ENCODE measurements at regions of chr22 and their contacts with region 1.

Region 1: DNA sequence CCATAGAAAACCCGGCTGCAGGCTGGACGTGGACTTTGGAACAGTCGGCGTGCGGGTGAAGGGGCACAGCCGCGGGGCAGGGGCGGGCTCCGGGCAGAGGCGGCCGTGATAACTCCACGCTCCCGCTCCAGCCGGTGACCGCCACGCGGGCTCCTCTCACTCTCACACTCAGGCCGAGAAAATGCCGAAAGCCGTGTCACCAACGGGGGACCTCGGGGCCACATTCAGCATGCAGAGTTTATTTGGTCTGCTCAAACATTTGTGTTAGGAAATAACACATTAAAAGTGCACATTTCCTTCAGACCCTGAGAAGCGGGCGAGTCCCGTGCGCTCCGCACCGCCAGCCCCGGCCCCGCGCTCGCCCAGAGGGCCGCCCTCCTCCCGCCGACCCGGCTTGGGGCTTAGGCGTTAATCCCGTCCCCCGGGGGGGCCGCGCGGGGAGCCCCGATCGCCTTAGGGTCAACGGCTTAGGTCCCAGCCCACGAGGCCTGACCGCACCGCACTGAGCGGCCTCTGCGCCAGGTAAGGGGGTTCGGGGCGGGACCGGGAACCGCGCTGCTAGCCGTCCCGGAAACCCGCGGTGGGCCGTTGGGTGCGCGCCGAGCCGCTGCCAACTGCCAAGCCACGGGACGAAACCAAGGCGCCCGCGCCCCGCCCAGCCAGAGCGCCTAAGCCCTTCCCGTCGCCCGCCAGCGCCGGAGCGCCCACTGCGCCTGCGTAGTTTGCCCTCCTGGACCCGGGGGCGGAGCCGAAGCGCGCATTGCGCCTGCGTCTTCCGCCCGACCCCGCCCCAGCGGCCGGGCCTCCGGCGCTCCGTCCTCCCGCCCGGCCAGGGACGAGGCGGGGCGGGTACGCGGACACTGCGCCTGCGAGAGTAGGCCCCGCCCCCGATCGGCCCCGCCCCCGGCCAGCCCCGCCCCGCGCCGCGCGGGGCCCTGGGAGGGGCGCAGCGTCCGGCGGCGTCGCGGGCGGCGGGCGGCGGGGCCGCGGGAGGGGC is at the start of gene ZBED4:
- DNase-seq: peak; percentile 94 to 99
- H3K4me3 ChIP-seq: peak within 1 kb of the TSS; percentile 87 to 89
- H3K27ac ChIP-seq: peak within 1 kb of the TSS; percentile 96 to 97
- H3K4me1 ChIP-seq: peaks cover 0 to 47% (median 40%) of the 10 kb centered on the region in 4 donors
- H3K27me3 ChIP-seq: peaks cover 0 to 26% of the 10 kb centered on the region in 2 donors
- CTCF ChIP-seq: no peak

Region 2: DNA sequence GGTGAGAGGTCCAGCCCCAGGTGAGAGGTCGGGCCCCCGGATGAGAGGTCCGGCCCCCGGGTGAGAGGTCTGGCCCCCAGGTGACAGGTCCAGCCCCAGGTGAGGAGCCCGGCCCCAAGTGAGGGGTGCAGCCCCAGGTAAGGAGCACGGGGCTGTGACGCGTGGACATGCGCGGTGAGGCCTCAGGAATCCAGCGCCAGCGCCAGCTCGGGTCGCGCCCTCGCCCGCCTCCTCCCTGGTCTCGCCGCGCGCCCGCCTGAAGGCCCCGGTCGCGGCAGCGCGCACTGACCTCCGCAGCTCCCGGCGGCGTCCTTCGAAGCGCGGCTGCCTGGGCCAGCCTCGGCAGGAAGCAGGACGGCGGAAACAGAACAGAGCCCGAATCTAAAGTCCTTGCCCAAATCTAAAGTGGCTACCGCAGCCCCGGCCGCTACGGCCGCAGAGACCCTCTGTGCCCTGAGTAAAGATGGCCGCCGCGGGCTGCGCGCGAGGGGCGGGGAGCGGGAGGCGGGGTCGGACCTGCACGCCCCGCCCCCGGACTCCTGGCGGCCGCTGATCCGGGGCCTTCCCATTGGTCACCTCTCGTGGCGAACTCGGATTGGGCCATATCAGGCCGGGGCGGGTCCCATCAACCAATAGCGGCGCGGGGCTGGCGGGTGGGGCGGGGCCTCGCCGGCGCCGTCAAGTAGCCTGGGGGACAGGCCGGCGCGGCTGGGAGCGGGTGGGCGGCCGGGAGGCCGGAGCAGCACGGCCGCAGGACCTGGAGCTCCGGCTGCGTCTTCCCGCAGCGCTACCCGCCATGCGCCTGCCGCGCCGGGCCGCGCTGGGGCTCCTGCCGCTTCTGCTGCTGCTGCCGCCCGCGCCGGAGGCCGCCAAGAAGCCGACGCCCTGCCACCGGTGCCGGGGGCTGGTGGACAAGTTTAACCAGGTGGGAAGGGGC is 65.0 kb after region 1 on chr22 and contains the starts of genes ALG12 and CRELD2:
- intact Hi-C with region 1: loop called (anchors 5 kb)
- DNase-seq: peak; percentile 98 to 99
- H3K4me3 ChIP-seq: peak within 1 kb of the TSS; percentile 66 to 69
- H3K27ac ChIP-seq: peak within 1 kb of the TSS; percentile 87 to 95
- H3K4me1 ChIP-seq: peaks cover 0 to 32% (median 19%) of the 10 kb centered on the region in 4 donors
- H3K27me3 ChIP-seq: no peaks in the 10 kb centered on the region
- CTCF ChIP-seq: no peak

Region 3: GRCh38 chr22:50148991-50149721 is 296.0 kb after region 1 on chr22:
- intact Hi-C with region 1: no loop called
- DNase-seq: no peak
- H3K4me3 ChIP-seq: no peak overlapping the region
- H3K27ac ChIP-seq: no peak overlapping the region
- H3K4me1 ChIP-seq: peaks cover 0 to 6% (median 0%) of the 10 kb centered on the region in 4 donors
- H3K27me3 ChIP-seq: peaks cover 0 to 44% of the 10 kb centered on the region in 2 donors
- CTCF ChIP-seq: peak; percentile 20 to 41

Region 4: GRCh38 chr22:50184004-50184543 is 330.9 kb after region 1 on chr22:
- intact Hi-C with region 1: loop called (anchors 5 kb)
- DNase-seq: peak; percentile 68 to 85
- H3K4me3 ChIP-seq: no peak overlapping the region
- H3K27ac ChIP-seq: no peak overlapping the region
- H3K4me1 ChIP-seq: peaks cover 0 to 48% (median 23%) of the 10 kb centered on the region in 4 donors
- H3K27me3 ChIP-seq: peaks cover 0 to 19% of the 10 kb centered on the region in 2 donors
- CTCF ChIP-seq: no peak

Measured in tibial artery (tissue), 4 donors.